Spleen (tissue), 13 donors: ENCODE measurements at regions of chr18 and their contacts with region 1.

Region 1: GRCh38 chr18:22279741-22280452 is 110.5 kb downstream of the GATA6 start:
- DNase-seq: no peak
- H3K4me3 ChIP-seq: no peak overlapping the region
- H3K27ac ChIP-seq: no peak overlapping the region
- H3K4me1 ChIP-seq: peaks cover 0 to 6% (median 0%) of the 10 kb centered on the region in 6 donors
- H3K27me3 ChIP-seq: no peaks in the 10 kb centered on the region
- CTCF ChIP-seq: no peak
- POLR2A ChIP-seq: no peak

Region 2: DNA sequence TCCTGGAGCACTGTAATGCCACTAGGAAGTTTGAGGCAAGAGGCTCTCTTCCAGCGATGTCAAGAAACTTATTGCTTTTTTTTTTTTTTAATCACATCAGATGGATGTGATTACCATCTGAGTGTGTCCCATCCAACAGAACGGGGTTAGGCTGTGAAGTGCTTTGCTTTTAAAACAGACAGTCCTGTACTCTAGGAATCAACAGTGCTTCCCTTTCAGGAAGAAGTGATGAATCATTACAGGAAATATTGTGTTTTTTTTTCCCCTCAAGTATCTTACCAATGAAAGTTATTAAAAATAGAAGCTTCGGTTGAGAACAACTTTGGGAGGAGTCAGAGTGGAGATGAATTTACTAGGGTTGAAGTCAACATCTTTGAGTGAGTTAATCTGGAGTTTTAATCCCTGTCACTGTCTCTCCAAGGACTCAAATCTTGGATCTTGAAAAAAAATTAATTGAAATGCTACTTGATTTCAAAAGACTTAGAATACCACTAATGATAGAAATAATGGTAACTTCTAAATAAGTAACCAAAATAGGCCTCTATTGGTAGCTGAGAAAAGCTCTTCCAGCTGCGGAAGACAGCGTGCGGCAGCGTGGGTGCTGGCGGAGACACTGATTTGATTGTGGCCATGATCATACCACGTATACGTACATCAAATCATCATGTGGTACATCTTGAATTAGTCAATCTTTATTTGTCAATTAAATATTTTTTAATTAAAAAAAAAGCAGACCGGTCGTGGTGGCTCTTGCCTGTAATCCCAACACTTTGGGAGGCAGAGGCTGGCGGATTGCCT is 65.0 kb before region 1 on chr18:
- intact Hi-C with region 1: loop called (anchors 10 kb)
- DNase-seq: no peak
- H3K4me3 ChIP-seq: no peak overlapping the region
- H3K27ac ChIP-seq: peak overlapping the region in 5 of 8 donors; percentile 9 to 22 (median 15)
- H3K4me1 ChIP-seq: peaks cover 0 to 21% (median 4%) of the 10 kb centered on the region in 6 donors
- H3K27me3 ChIP-seq: no peaks in the 10 kb centered on the region
- CTCF ChIP-seq: no peak
- POLR2A ChIP-seq: no peak